ENCODE measurements at regions of chr15 and their contacts with region 1.

Region 1: GRCh38 chr15:57580866-57581265 is 10.8 kb upstream of the MYZAP start:
- DNase-seq: no peak
- ATAC-seq: peak in 1 of 2 experiments; percentile 60; a peak in 2 of 6 replicates
- H3K4me3 ChIP-seq: no peak overlapping the region
- H3K27ac ChIP-seq: no peak overlapping the region
- H3K4me1 ChIP-seq: no peaks in the 10 kb centered on the region
- CTCF ChIP-seq: no peak
- EP300 ChIP-seq: no peak
- POLR2A ChIP-seq: no peak
- RAD21 ChIP-seq: no peak

Region 2: GRCh38 chr15:57591646-57592367 is 10.9 kb after region 1 on chr15 and contains the start of gene MYZAP:
- CTCF ChIA-PET with region 1: interaction called, 10 read pairs
- POLR2A ChIA-PET with region 1: no interaction called
- DNase-seq: peak in 1 of 2 experiments; percentile 84
- ATAC-seq: peak; percentile 82 to 94
- H3K4me3 ChIP-seq: peak within 1 kb of the TSS; percentile 66
- H3K27ac ChIP-seq: peak within 1 kb of the TSS; percentile 54 to 86
- H3K4me1 ChIP-seq: peaks cover 4% of the 10 kb centered on the region; the same call in 1 of the 3 replicates
- CTCF ChIP-seq: no peak
- EP300 ChIP-seq: no peak
- POLR2A ChIP-seq: no peak
- RAD21 ChIP-seq: no peak
- polyA plus RNA-seq, gene MYZAP: 1.1 and 1.2 TPM in 2 replicates